ENCODE measurements at regions of chr2 and their contacts with region 1.

Region 1: DNA sequence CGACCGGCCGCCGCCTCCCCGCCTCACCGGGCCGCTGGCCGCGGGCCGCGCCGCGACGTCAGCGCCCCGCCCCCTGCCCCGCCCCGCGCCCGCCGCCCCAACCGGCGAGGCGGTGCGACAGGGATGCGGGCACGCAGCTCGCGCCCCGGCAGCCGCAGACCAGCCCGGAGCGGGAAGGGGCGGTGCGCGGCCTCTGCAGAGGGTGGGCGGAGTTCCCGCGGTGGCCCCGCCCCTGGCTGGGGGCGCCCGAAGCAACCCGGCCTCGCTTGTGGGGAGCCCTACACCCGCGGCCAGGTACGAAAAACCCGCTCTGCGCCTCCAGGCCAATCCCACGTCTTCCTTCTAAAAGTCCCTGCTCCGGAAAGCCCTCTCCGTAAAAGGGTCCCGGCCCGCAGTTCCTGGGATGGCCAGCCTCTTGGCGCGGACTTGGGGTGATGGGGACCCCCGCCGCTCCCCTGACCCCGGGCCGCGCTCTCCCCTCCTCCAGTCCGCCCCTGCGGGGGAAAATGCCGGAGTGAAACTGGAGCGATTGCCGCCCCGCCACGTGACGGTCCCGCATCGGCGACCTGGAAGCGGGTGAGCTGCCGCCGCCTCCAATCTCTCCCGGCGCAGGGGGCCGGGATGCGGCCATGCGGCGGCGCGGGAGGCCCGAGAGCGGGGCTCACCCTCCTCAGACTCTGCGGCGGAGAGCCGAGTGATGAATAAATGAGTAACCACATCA is at the start of gene RAB11FIP5:
- DNase-seq: peak; percentile 87
- ATAC-seq: peak; percentile 84
- H3K4me3 Mint-ChIP-seq: peak within 1 kb of the TSS; percentile 79
- H3K27ac Mint-ChIP-seq: peak within 1 kb of the TSS; percentile 40
- H3K4me1 Mint-ChIP-seq: peaks cover 23% of the 10 kb centered on the region
- H3K27me3 Mint-ChIP-seq: peaks cover 2% of the 10 kb centered on the region
- total RNA-seq, gene RAB11FIP5: 16.4 to 16.5 TPM

Region 2: GRCh38 chr2:72825241-72826155 is 287.6 kb before region 1 on chr2 and contains the start of gene EXOC6B:
- CTCF ChIA-PET with region 1: no interaction called
- POLR2A ChIA-PET with region 1: no interaction called
- intact Hi-C with region 1: loop called in 1 of 2 experiments (anchors 5 kb)
- DNase-seq: peak; percentile 91
- ATAC-seq: peak; percentile 80
- H3K4me3 Mint-ChIP-seq: peak within 1 kb of the TSS; percentile 93
- H3K27ac Mint-ChIP-seq: peak within 1 kb of the TSS; percentile 75
- H3K4me1 Mint-ChIP-seq: peaks cover 40% of the 10 kb centered on the region
- H3K27me3 Mint-ChIP-seq: peaks cover 2% of the 10 kb centered on the region
- total RNA-seq, gene EXOC6B: 7.0 to 9.0 TPM

Region 3: GRCh38 chr2:72915907-72916742 is 196.9 kb before region 1 on chr2:
- CTCF ChIA-PET with region 1: interaction called, 3 read pairs
- POLR2A ChIA-PET with region 1: no interaction called
- intact Hi-C with region 1: loop called in 1 of 2 experiments (anchors 2 kb)
- DNase-seq: peak; percentile 74
- ATAC-seq: peak; percentile 60
- H3K4me3 Mint-ChIP-seq: peak overlapping the region; percentile 64
- H3K27ac Mint-ChIP-seq: no peak overlapping the region
- H3K4me1 Mint-ChIP-seq: peaks cover 30% of the 10 kb centered on the region
- H3K27me3 Mint-ChIP-seq: peaks cover 71% of the 10 kb centered on the region

Region 4: DNA sequence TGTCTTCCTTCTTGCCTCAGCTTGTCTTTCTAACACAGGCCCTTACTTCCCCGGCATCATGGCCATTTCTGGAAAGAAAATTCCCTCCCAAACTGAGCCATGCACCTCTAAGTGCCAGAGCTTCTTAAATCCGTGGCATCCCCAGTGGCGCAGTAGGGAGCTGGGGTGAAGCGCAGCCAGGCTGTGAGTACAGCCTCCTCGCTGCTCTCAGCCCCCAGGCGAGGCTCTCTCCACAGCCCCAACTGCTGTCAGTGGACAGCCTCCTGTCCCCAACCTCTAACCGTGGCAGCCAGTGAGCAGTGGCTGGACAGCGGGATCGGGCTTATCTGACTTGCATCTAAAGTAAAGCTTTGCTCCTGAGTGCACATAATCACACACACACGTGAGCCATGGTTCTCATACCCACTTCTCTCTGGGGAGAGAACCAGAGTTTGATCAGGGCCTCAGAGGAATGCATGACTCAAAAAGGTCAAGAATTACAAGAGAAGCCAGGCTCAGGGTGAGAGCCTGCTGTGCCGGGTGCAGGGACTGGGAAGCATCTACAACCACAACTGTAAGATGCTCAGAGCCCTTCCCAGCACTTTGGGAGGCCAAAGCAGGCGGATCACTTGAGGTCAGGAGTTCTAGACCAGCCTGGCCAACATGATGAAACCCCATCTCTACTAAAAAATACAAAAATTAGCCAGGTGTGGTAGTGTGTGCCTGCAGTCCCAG is 92.3 kb before region 1 on chr2:
- CTCF ChIA-PET with region 1: no interaction called
- POLR2A ChIA-PET with region 1: no interaction called
- intact Hi-C with region 1: no loop called
- DNase-seq: no peak
- ATAC-seq: no peak
- H3K4me3 Mint-ChIP-seq: no peak overlapping the region
- H3K27ac Mint-ChIP-seq: no peak overlapping the region
- H3K4me1 Mint-ChIP-seq: no peaks in the 10 kb centered on the region
- H3K27me3 Mint-ChIP-seq: no peaks in the 10 kb centered on the region

Region 5: DNA sequence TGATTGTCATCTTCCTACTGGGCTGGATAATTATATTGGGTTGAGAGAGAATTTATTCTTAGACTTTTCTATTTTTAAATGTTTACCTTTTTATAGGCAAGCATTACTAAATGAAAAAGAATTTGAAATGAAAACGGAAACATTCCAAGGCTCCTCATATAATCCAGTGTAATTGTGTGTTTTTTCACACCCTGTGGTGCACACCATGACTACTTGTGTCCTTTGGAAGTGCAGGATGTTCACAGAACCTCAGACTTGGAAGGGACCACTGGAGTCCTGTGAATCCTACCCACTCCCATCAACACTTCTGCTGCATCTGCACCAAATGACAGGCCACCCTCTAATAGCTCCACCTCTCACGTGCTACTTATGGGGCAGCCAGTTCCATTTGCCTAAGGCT is 481.2 kb after region 1 on chr2:
- CTCF ChIA-PET with region 1: no interaction called
- POLR2A ChIA-PET with region 1: no interaction called
- intact Hi-C with region 1: no loop called
- DNase-seq: no peak
- ATAC-seq: no peak
- H3K4me3 Mint-ChIP-seq: no peak overlapping the region
- H3K27ac Mint-ChIP-seq: no peak overlapping the region
- H3K4me1 Mint-ChIP-seq: no peaks in the 10 kb centered on the region
- H3K27me3 Mint-ChIP-seq: no peaks in the 10 kb centered on the region

Measured in activated CD4-positive, alpha-beta T cell treated with anti-CD3 and anti-CD28 coated beads for 36 hours (primary cell).